ENCODE measurements at regions of chr2 and their contacts with region 1.

Region 1: GRCh38 chr2:239889641-239890121 is 135.5 kb downstream of the NDUFA10 start:
- DNase-seq: no peak
- ATAC-seq: no peak
- H3K4me3 ChIP-seq: no peak overlapping the region
- H3K27ac ChIP-seq: no peak overlapping the region
- H3K4me1 ChIP-seq: no peaks in the 10 kb centered on the region
- H3K27me3 ChIP-seq: no peaks in the 10 kb centered on the region; the same call in 1 of the 2 replicates
- CTCF ChIP-seq: no peak

Region 2: DNA sequence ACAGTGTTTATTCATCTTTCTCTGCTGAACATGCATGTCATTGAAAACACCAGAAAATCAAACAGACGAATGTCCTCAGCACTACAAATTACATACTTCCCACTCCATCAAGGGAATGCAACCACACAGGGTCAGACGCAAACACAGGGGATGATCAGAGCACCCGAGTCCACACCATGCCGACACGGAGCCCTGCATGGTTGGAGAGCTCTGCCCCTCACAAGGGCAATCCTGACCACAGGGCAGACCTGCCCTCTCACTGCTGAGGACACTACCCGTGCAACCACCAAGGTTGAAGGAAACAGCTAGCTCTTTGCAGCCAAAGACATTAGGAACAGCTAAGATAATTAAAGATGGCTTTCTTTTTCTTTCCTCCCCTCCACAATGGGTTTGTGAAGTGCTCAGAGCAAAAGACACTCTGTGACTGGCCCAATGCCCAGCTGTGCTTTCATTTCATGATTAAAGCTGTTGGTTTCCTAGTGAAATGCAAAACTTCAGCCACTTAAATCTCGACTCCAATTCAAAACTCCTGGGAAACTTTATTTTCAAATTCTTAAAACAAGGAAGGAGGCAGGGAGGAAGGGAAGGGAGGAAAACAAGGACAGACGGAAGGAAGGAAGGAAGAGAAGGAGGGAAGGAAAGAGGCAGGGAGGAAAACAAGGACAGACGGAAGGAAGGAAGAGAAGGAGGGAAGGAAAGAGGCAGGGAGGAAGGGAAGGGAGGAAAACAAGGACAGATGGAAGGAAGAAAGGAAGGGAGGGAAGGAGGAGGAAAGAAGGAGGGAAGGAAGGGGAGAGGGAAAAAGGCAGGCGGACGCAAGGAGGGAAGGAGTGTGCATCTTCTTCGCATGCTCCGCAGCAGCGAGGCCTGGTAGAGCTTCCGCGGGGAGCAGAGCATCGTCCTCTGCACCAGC is 69.6 kb after region 1 on chr2:
- CTCF ChIA-PET with region 1: no interaction called
- POLR2A ChIA-PET with region 1: no interaction called
- in situ Hi-C with region 1: no loop called
- intact Hi-C with region 1: no loop called
- DNase-seq: no peak
- ATAC-seq: no peak
- H3K4me3 ChIP-seq: no peak overlapping the region
- H3K27ac ChIP-seq: no peak overlapping the region
- H3K4me1 ChIP-seq: no peaks in the 10 kb centered on the region
- H3K27me3 ChIP-seq: no peaks in the 10 kb centered on the region
- CTCF ChIP-seq: no peak

Region 3: GRCh38 chr2:240043279-240043989 is 153.8 kb after region 1 on chr2:
- CTCF ChIA-PET with region 1: no interaction called
- POLR2A ChIA-PET with region 1: no interaction called
- in situ Hi-C with region 1: no loop called
- intact Hi-C with region 1: no loop called
- DNase-seq: no peak
- ATAC-seq: no peak
- H3K4me3 ChIP-seq: no peak overlapping the region
- H3K27ac ChIP-seq: no peak overlapping the region
- H3K4me1 ChIP-seq: no peaks in the 10 kb centered on the region
- H3K27me3 ChIP-seq: peaks cover 14% of the 10 kb centered on the region
- CTCF ChIP-seq: no peak

Region 4: DNA sequence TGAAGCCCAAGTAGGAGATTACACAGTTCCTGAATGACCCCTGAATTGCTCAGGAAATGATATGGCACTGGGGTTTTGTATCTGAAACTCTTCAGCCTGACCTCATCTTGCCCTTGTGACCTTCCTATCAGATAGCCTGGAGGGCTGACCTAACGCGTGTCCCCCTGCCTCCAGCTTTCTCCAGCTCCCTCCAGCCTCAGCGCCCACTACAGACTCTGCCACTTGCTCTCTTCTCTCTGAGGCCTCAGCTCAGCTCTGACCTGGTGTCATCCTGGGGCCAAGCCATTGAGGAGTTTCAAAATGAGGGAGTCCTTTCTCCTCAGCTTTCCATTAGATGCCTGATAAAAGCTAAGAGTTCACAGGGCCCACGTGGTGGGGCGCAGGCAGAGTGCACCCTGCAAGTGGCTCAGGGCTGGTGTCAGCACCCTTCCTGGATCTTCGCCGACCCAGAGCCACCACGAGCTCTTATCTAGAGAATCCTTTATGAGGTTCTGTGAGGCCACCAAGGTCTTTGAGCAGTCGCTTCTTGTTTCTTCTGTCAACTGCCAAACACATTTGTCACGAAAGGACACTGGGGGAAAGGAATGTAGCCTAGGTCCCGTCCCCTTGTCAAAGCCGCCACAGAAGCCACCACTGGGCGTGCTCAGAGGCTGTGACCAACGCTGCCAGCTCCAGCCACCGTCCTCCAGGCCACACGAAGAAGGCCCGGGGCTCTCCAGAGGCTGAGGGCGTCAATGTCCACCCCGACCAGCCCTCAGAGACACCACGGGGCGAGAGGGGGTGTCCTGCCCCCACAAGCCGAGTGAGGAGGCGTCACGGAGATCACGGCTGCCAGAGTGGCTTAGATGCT is 414.4 kb after region 1 on chr2:
- CTCF ChIA-PET with region 1: interaction called, 11 read pairs
- POLR2A ChIA-PET with region 1: no interaction called
- in situ Hi-C with region 1: no loop called
- intact Hi-C with region 1: no loop called
- DNase-seq: no peak
- ATAC-seq: no peak
- H3K4me3 ChIP-seq: no peak overlapping the region
- H3K27ac ChIP-seq: no peak overlapping the region
- H3K4me1 ChIP-seq: no peaks in the 10 kb centered on the region
- H3K27me3 ChIP-seq: no peaks in the 10 kb centered on the region
- CTCF ChIP-seq: no peak

Measured in Panc1 (cell line).